ENCODE measurements at regions of chr3 and their contacts with region 1.

Region 1: DNA sequence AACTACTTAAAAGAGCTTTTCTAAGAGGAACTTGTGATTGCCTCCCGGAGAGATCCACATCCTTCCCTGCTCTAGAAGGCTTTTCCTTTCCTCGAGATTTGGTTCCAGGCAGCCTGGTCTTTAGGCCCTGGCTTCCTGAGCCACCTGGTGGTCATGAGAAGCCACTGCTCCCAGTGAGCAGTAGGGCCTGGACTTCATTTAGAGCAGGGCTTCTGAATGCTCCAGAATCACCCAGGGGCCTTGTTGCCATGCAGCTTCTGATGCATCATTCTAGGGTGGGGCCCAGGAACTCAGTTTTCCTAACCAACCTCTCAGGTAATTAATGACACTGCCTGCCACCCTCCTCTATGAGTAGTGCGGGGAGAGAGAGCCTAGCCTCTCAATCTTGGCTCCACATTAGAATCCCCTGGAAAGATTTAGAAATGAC is 29.6 kb downstream of the PSMD6 start:
- DNase-seq: peak; percentile 53 to 68 (median 65)
- H3K4me3 ChIP-seq: no peak overlapping the region
- H3K4me3 Mint-ChIP-seq: peak overlapping the region in 1 of 2 donors; percentile 13
- H3K27ac ChIP-seq: peak overlapping the region in 1 of 2 donors; percentile 63
- H3K27ac Mint-ChIP-seq: peak overlapping the region in 6 of 7 donors; percentile 4 to 70 (median 63)
- H3K4me1 ChIP-seq: peaks cover 5 to 8% of the 10 kb centered on the region in 2 donors
- H3K4me1 Mint-ChIP-seq: peaks cover 18% of the 10 kb centered on the region
- H3K27me3 ChIP-seq: no peaks in the 10 kb centered on the region
- H3K27me3 Mint-ChIP-seq: no peaks in the 10 kb centered on the region
- CTCF ChIP-seq: peak; percentile 87

Region 2: DNA sequence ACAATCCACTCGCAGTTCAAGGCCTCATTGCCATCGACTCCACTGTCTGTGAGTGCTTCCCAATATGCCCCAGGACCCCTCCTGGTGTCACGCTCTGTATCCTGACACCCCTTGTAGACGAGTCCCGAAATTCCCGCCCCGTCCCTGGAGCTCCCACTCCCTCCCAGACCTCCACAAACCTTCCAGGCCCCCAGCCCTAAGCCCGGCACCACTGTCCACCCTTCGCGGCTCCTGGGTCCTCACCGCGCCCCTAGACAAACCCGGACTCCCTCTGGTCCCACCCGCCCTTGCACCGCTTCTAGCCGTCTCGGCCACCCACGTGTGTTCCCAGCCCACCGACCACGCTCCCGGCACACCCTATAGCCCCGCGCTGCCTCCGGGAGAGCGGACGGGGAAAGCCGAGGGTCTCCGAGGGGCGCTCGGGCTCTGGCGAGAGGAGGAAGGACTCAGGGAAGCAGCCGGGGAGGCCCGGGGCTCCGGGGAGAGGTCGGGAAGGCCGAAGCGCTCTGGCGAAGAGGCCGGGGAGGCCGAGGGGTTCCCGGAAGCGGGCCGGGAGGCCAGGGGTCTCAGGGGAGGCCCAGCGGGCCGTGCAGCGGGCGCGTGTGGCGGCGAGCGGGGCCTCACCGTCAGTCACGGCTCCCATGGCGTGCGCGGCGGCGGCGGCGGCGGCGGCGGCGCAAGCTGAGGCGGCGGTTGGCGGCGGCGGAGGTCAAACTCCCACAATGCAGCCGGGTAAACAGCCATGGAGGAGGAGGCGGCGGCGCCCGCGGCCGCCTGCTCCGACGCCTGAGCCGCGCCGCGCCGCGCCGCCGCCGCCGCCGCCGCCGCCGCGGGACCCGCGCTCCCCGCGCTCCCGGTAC is 130.3 kb before region 1 on chr3 and contains the starts of genes ATXN7 and THOC7:
- intact Hi-C with region 1: loop called in 1 of 2 experiments (anchors 10 kb)
- DNase-seq: peak; percentile 36 to 60 (median 58)
- H3K4me3 ChIP-seq: peak within 1 kb of the TSS; percentile 90 to 93 (median 92)
- H3K4me3 Mint-ChIP-seq: peak within 1 kb of the TSS; percentile 96 to 97
- H3K27ac ChIP-seq: peak within 1 kb of the TSS; percentile 85 to 95
- H3K27ac Mint-ChIP-seq: peak within 1 kb of the TSS; percentile 89 to 97 (median 97)
- H3K4me1 ChIP-seq: peaks cover 22 to 26% of the 10 kb centered on the region in 2 donors
- H3K4me1 Mint-ChIP-seq: peaks cover 36% of the 10 kb centered on the region
- H3K27me3 ChIP-seq: no peaks in the 10 kb centered on the region
- H3K27me3 Mint-ChIP-seq: peaks cover 0 to 3% (median 3%) of the 10 kb centered on the region in 3 donors
- CTCF ChIP-seq: no peak
- polyA plus RNA-seq, gene ATXN7: 2.7 to 29.5 (median 3.2) TPM
- polyA plus RNA-seq, gene THOC7: 22.2 to 74.8 (median 70.1) TPM

Region 3: GRCh38 chr3:63961891-63962290 is 31.8 kb before region 1 on chr3:
- intact Hi-C with region 1: loop called in 1 of 2 experiments (anchors 5 kb)
- DNase-seq: peak in 2 of 3 donors; percentile 42 to 49
- H3K4me3 ChIP-seq: no peak overlapping the region
- H3K4me3 Mint-ChIP-seq: no peak overlapping the region
- H3K27ac ChIP-seq: no peak overlapping the region
- H3K27ac Mint-ChIP-seq: peak overlapping the region in 1 of 7 donors; percentile 30
- H3K4me1 ChIP-seq: peaks cover 15 to 18% of the 10 kb centered on the region in 2 donors
- H3K4me1 Mint-ChIP-seq: peaks cover 30% of the 10 kb centered on the region
- H3K27me3 ChIP-seq: no peaks in the 10 kb centered on the region
- H3K27me3 Mint-ChIP-seq: no peaks in the 10 kb centered on the region
- CTCF ChIP-seq: peak; percentile 90